CD8-positive, alpha-beta T cell (primary cell): ENCODE measurements at regions of chr15 and their contacts with region 1.

Region 1: GRCh38 chr15:92808978-92809879 is 90.9 kb upstream of the CHD2 start:
- DNase-seq: peak; percentile 97 to 100 (median 99)
- ATAC-seq: peak; percentile 76
- H3K4me3 ChIP-seq: peak overlapping the region; percentile 71 to 87
- H3K4me3 Mint-ChIP-seq: peak overlapping the region; percentile 80
- H3K27ac ChIP-seq: peak overlapping the region; percentile 94 to 98
- H3K27ac Mint-ChIP-seq: peak overlapping the region; percentile 95
- H3K4me1 ChIP-seq: peaks cover 47% of the 10 kb centered on the region
- H3K4me1 Mint-ChIP-seq: peaks cover 45% of the 10 kb centered on the region
- H3K27me3 ChIP-seq: no peaks in the 10 kb centered on the region
- H3K27me3 Mint-ChIP-seq: no peaks in the 10 kb centered on the region
- CTCF ChIP-seq: peak; percentile 92

Region 2: DNA sequence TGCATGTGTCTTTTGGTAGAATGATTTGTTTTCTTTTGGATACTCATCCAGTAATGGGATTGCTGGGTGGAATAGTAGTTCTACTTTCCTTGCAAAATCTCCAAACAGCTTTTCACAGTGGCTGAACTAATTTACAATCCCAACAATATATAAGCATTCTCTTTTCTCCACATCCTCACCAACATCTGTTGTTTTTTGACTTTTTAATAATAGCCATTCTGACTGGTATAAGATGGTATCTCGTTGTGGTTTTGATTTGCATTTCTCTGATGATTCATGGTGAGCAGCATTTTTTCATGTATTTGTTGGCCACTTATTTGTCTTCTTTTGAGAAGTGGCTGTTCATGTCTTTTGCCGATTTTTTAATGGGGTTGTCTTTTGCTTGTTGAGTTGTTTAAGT is 359.8 kb before region 1 on chr15:
- CTCF ChIA-PET with region 1: no interaction called
- POLR2A ChIA-PET with region 1: no interaction called
- intact Hi-C with region 1: no loop called
- DNase-seq: no peak
- ATAC-seq: no peak
- H3K4me3 ChIP-seq: no peak overlapping the region
- H3K4me3 Mint-ChIP-seq: no peak overlapping the region
- H3K27ac ChIP-seq: no peak overlapping the region
- H3K27ac Mint-ChIP-seq: no peak overlapping the region
- H3K4me1 ChIP-seq: no peaks in the 10 kb centered on the region
- H3K4me1 Mint-ChIP-seq: no peaks in the 10 kb centered on the region
- H3K27me3 ChIP-seq: no peaks in the 10 kb centered on the region
- H3K27me3 Mint-ChIP-seq: peaks cover 2% of the 10 kb centered on the region
- CTCF ChIP-seq: no peak

Region 3: GRCh38 chr15:92797168-92797951 is 11.9 kb before region 1 on chr15:
- CTCF ChIA-PET with region 1: interaction called, 16 read pairs
- POLR2A ChIA-PET with region 1: interaction called, 16 read pairs
- intact Hi-C with region 1: loop called in 1 of 2 experiments (anchors 1 kb)
- DNase-seq: peak in 4 of 9 experiments; percentile 22 to 87 (median 67)
- ATAC-seq: peak; percentile 95
- H3K4me3 ChIP-seq: no peak overlapping the region
- H3K4me3 Mint-ChIP-seq: no peak overlapping the region
- H3K27ac ChIP-seq: no peak overlapping the region
- H3K27ac Mint-ChIP-seq: peak overlapping the region; percentile 65
- H3K4me1 ChIP-seq: peaks cover 3% of the 10 kb centered on the region
- H3K4me1 Mint-ChIP-seq: peaks cover 6% of the 10 kb centered on the region
- H3K27me3 ChIP-seq: no peaks in the 10 kb centered on the region
- H3K27me3 Mint-ChIP-seq: no peaks in the 10 kb centered on the region
- CTCF ChIP-seq: peak; percentile 74

Region 4: GRCh38 chr15:92820236-92821021 is 11.2 kb after region 1 on chr15:
- CTCF ChIA-PET with region 1: interaction called, 7 read pairs
- POLR2A ChIA-PET with region 1: interaction called, 63 read pairs
- intact Hi-C with region 1: loop called (anchors 1 kb)
- DNase-seq: peak; percentile 64 to 94 (median 85)
- ATAC-seq: peak; percentile 88
- H3K4me3 ChIP-seq: peak overlapping the region; percentile 57 to 64
- H3K4me3 Mint-ChIP-seq: peak overlapping the region; percentile 87
- H3K27ac ChIP-seq: peak overlapping the region; percentile 69 to 75
- H3K27ac Mint-ChIP-seq: peak overlapping the region; percentile 94
- H3K4me1 ChIP-seq: peaks cover 47% of the 10 kb centered on the region
- H3K4me1 Mint-ChIP-seq: peaks cover 52% of the 10 kb centered on the region
- H3K27me3 ChIP-seq: no peaks in the 10 kb centered on the region
- H3K27me3 Mint-ChIP-seq: no peaks in the 10 kb centered on the region
- CTCF ChIP-seq: no peak

Region 5: GRCh38 chr15:92831655-92832328 is 22.6 kb after region 1 on chr15:
- CTCF ChIA-PET with region 1: interaction called, 4 read pairs
- POLR2A ChIA-PET with region 1: interaction called, 40 read pairs
- intact Hi-C with region 1: loop called (anchors 1 kb)
- DNase-seq: peak; percentile 72 to 96 (median 90)
- ATAC-seq: peak; percentile 93
- H3K4me3 ChIP-seq: peak overlapping the region; percentile 15 to 41
- H3K4me3 Mint-ChIP-seq: peak overlapping the region; percentile 72
- H3K27ac ChIP-seq: peak overlapping the region; percentile 67 to 80
- H3K27ac Mint-ChIP-seq: peak overlapping the region; percentile 96
- H3K4me1 ChIP-seq: peaks cover 42% of the 10 kb centered on the region
- H3K4me1 Mint-ChIP-seq: peaks cover 44% of the 10 kb centered on the region
- H3K27me3 ChIP-seq: no peaks in the 10 kb centered on the region
- H3K27me3 Mint-ChIP-seq: no peaks in the 10 kb centered on the region
- CTCF ChIP-seq: no peak

Region 6: DNA sequence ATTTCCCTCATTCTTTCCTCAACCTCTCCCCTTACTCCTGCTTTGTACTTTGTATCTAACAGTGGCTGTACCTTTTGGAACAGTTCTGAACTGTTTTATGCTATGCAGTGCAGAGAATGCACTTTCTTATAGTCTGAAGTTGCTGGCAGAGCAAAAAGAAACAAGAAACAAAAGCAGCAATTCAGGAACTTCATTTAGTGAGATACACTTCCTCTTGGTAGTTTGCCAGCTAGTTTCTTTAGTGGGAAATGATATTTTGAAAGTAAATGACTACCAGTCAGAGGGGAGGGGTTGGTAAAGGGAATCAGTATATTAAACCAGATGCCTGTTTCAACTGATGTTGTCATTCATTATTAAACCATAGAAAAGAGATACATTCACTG is 35.9 kb after region 1 on chr15:
- CTCF ChIA-PET with region 1: no interaction called
- POLR2A ChIA-PET with region 1: interaction called, 6 read pairs
- intact Hi-C with region 1: loop called (anchors 1 to 5 kb)
- DNase-seq: peak in 2 of 9 experiments; percentile 57 to 79
- ATAC-seq: peak; percentile 34
- H3K4me3 ChIP-seq: peak overlapping the region in 1 of 2 experiments; percentile 4
- H3K4me3 Mint-ChIP-seq: peak overlapping the region; percentile 72
- H3K27ac ChIP-seq: peak overlapping the region; percentile 23 to 46
- H3K27ac Mint-ChIP-seq: peak overlapping the region; percentile 93
- H3K4me1 ChIP-seq: peaks cover 71% of the 10 kb centered on the region
- H3K4me1 Mint-ChIP-seq: peaks cover 75% of the 10 kb centered on the region
- H3K27me3 ChIP-seq: no peaks in the 10 kb centered on the region
- H3K27me3 Mint-ChIP-seq: no peaks in the 10 kb centered on the region
- CTCF ChIP-seq: no peak

Region 7: GRCh38 chr15:92896561-92896960 is 87.3 kb after region 1 on chr15:
- CTCF ChIA-PET with region 1: interaction called, 33 read pairs
- POLR2A ChIA-PET with region 1: interaction called, 251 read pairs
- intact Hi-C with region 1: loop called (anchors 1 kb)
- DNase-seq: no peak
- ATAC-seq: no peak
- H3K4me3 ChIP-seq: no peak overlapping the region
- H3K4me3 Mint-ChIP-seq: peak overlapping the region; percentile 32
- H3K27ac ChIP-seq: peak overlapping the region; percentile 25 to 38
- H3K27ac Mint-ChIP-seq: peak overlapping the region; percentile 60
- H3K4me1 ChIP-seq: peaks cover 72% of the 10 kb centered on the region
- H3K4me1 Mint-ChIP-seq: peaks cover 70% of the 10 kb centered on the region
- H3K27me3 ChIP-seq: no peaks in the 10 kb centered on the region
- H3K27me3 Mint-ChIP-seq: no peaks in the 10 kb centered on the region
- CTCF ChIP-seq: no peak

Region 8: GRCh38 chr15:92903941-92904831 is 95.0 kb after region 1 on chr15:
- CTCF ChIA-PET with region 1: interaction called, 33 read pairs
- POLR2A ChIA-PET with region 1: interaction called, 251 read pairs
- intact Hi-C with region 1: loop called (anchors 1 kb)
- DNase-seq: peak; percentile 98 to 99 (median 99)
- ATAC-seq: peak; percentile 77
- H3K4me3 ChIP-seq: peak overlapping the region; percentile 75 to 88
- H3K4me3 Mint-ChIP-seq: peak overlapping the region; percentile 94
- H3K27ac ChIP-seq: peak overlapping the region; percentile 95 to 99
- H3K27ac Mint-ChIP-seq: peak overlapping the region; percentile 99
- H3K4me1 ChIP-seq: peaks cover 60% of the 10 kb centered on the region
- H3K4me1 Mint-ChIP-seq: peaks cover 58% of the 10 kb centered on the region
- H3K27me3 ChIP-seq: no peaks in the 10 kb centered on the region
- H3K27me3 Mint-ChIP-seq: no peaks in the 10 kb centered on the region
- CTCF ChIP-seq: no peak